Mammary epithelial cell (primary cell): ENCODE measurements at regions of chr6 and their contacts with region 1.

Region 1: DNA sequence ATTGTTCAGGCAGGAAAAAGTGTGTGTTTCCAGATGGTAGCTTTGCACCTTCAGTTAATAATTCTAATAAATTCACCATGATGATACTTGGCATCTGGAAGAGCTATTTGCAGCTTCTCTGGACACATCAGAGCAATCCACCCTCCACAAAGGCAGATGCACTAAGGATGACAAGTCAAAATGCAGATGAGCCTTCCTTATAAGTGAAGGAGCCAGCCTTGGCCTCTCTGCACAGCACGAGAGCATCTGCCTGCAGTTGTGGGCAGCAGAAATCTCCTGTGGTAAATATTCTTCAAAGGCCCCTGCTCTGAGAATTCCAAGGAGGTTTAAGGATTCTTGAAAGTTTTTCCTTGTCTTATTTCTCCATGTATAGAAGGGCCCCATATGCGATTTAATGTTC is 6.9 kb upstream of the POM121L2 start:
- DNase-seq: no peak
- H3K4me3 ChIP-seq: no peak overlapping the region
- H3K27ac ChIP-seq: no peak overlapping the region
- H3K4me1 ChIP-seq: no peaks in the 10 kb centered on the region
- H3K27me3 ChIP-seq: no peaks in the 10 kb centered on the region
- CTCF ChIP-seq: no peak

Region 2: GRCh38 chr6:27400877-27401642 is 82.1 kb after region 1 on chr6:
- CTCF ChIA-PET with region 1: no interaction called
- dilution Hi-C with region 1: loop called (anchors 5 kb)
- in situ Hi-C with region 1: no loop called
- intact Hi-C with region 1: no loop called
- DNase-seq: no peak
- H3K4me3 ChIP-seq: no peak overlapping the region
- H3K27ac ChIP-seq: no peak overlapping the region
- H3K4me1 ChIP-seq: no peaks in the 10 kb centered on the region
- H3K27me3 ChIP-seq: no peaks in the 10 kb centered on the region
- CTCF ChIP-seq: no peak